ENCODE measurements at regions of chr7 and their contacts with region 1.

Region 1: DNA sequence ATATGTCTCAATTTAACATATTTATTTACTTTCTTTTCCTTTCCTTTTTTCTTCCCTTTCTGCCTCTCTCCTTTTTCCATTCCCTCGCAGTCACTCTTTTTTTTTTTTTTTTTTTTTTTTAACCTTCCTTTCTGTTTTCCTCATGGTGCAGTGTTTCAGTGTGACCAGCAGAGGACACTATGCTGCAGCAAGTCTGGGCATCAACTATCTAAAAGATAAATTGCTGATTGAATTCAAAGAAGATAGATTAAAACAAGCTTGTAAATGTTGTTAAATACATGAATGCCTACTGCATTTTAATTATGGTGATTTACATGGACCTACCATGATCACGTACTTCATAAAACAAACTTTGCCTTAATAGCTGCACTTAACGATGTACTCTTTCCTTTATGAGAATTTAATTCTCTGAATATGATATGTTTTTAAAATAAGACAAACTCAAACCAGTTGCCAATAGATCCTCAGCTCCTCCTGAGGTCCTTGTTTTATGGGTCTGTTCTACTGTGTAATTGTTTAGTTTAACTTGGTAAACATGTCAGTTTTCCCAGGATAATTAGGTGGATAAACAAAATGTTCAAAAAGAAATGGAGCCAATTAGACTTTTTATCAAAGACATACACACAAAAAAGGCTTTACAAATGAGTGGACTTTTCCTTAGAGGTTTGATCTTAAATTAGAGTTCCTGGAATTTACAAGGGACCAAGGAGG is 101.0 kb upstream of the AGR3 start:
- DNase-seq: no peak
- H3K4me3 ChIP-seq: no peak overlapping the region
- H3K27ac ChIP-seq: no peak overlapping the region
- H3K27me3 ChIP-seq: no peaks in the 10 kb centered on the region
- CTCF ChIP-seq: peak; percentile 98

Region 2: GRCh38 chr7:16688249-16688648 is 294.5 kb before region 1 on chr7:
- CTCF ChIA-PET with region 1: no interaction called
- POLR2A ChIA-PET with region 1: no interaction called
- DNase-seq: no peak
- H3K4me3 ChIP-seq: no peak overlapping the region
- H3K27ac ChIP-seq: no peak overlapping the region
- H3K27me3 ChIP-seq: no peaks in the 10 kb centered on the region
- CTCF ChIP-seq: no peak

Region 3: GRCh38 chr7:16961641-16962040 is 21.2 kb before region 1 on chr7:
- CTCF ChIA-PET with region 1: interaction called, 10 read pairs
- POLR2A ChIA-PET with region 1: no interaction called
- DNase-seq: peak; percentile 37
- H3K4me3 ChIP-seq: no peak overlapping the region
- H3K27ac ChIP-seq: no peak overlapping the region
- H3K27me3 ChIP-seq: no peaks in the 10 kb centered on the region
- CTCF ChIP-seq: no peak

Region 4: DNA sequence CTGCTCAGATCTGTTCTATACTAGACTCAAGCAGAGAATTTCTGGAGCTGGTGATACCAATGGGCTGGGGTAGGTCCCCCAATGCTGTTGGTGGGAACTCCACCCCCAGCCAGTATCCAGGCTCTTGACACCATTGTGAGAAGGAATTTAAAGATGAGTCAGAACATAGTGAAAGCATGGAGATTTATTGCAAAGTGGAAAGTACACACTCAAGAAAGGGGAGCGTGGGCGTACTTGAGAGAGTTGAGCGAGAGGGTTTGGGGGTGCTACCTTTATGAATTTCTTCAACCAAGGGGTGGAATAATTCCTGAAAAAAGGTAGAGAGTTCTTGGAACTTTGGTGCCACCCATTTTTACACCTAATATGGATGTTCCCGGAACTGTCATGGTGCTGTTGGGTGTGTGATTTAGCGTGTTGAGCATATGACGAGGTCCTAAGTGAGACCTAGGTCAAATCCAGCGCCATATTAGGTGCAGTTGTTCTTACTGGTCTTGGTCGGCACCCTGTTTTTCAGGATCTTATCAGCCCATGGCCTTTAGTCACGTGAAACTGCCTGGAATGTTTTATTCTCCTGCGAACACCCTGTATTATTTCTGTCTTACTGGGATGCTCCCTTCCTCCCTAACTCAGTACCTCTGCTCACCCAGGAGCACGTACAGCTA is 193.7 kb after region 1 on chr7:
- CTCF ChIA-PET with region 1: interaction called, 13 read pairs
- POLR2A ChIA-PET with region 1: no interaction called
- DNase-seq: no peak
- H3K4me3 ChIP-seq: no peak overlapping the region
- H3K27ac ChIP-seq: no peak overlapping the region
- H3K27me3 ChIP-seq: no peaks in the 10 kb centered on the region
- CTCF ChIP-seq: no peak

Region 5: GRCh38 chr7:17289074-17289645 is 306.4 kb after region 1 on chr7:
- CTCF ChIA-PET with region 1: interaction called, 10 read pairs
- POLR2A ChIA-PET with region 1: no interaction called
- DNase-seq: no peak
- H3K4me3 ChIP-seq: no peak overlapping the region
- H3K27ac ChIP-seq: no peak overlapping the region
- H3K27me3 ChIP-seq: no peaks in the 10 kb centered on the region
- CTCF ChIP-seq: no peak

Region 6: DNA sequence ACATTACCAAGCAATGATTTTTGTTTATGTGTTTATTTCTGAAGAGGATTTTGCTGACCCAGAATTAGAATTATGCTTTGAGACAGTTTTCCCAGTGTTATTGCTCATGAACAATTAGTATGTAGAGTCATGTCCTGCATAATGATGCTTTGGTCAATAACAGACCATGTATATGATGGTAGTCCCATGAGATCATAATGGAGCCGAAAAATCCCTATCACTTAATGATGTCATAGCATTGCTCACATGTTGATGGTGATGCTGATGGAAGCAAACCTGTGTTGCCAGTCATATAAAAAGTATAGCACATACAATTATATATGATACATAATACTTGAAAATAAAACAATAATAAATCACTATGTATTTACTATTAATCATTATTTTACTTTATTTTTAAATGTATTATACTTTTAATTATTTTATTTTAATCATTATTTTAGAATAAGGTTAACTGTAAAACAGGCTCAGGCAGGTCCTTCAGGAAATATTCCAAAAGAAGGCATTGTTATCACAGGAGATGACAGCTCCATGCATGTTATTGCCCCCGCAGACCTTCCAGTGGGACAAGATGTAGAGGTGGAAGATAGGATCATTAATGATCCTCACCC is 349.2 kb after region 1 on chr7:
- CTCF ChIA-PET with region 1: interaction called, 16 read pairs
- POLR2A ChIA-PET with region 1: no interaction called
- DNase-seq: no peak
- H3K4me3 ChIP-seq: no peak overlapping the region
- H3K27ac ChIP-seq: no peak overlapping the region
- H3K27me3 ChIP-seq: no peaks in the 10 kb centered on the region
- CTCF ChIP-seq: no peak

Region 7: DNA sequence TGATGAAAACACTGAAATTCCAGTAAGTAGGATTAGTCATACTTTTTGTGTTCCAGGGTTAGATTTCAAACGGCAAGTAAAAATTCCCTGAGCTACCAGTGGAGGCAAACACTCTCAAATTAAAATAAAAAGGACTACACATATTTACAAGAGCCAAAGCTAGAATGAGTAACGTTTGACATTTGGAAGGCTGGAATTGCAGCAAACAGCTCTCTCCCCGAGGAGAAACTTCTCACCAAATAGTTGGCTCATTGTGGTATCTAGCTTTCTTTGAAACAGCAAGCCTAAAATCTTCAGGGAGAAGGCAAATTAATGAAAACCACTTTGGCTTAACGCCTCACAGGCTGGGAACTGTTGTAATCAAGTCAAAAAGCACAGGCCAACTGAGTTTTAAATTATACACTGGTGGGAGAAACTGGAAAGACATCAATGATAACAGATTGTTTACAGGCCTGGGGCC is 669.2 kb after region 1 on chr7:
- CTCF ChIA-PET with region 1: interaction called, 49 read pairs
- POLR2A ChIA-PET with region 1: no interaction called
- DNase-seq: peak; percentile 67
- H3K4me3 ChIP-seq: no peak overlapping the region
- H3K27ac ChIP-seq: peak overlapping the region; percentile 73
- H3K27me3 ChIP-seq: no peaks in the 10 kb centered on the region
- CTCF ChIP-seq: peak; percentile 53